ENCODE measurements at regions of chr15 and their contacts with region 1.

Region 1: GRCh38 chr15:43285609-43286037 is 18.9 kb upstream of the TGM5 start:
- DNase-seq: peak; percentile 85
- CTCF ChIP-seq: peak; percentile 84

Region 2: DNA sequence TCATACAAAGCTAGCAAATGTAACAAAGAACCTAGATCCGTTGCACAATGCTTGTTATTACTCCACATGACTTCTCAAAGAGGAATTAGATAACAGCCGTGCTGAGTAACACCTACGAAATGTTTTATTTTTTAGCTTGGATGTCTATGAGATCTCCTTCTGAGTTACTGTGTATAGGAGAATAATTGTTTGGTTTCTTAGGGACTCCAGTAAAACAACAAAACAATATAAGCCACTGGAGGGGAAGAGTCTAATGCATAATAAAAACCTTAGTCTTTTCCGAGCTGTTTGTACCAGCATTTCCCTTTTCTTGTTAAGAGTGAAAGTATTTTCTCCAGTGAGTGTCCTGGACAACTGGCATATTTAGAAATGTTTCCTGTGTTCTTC is 774.6 kb before region 1 on chr15:
- CTCF ChIA-PET with region 1: no interaction called
- POLR2A ChIA-PET with region 1: no interaction called
- DNase-seq: no peak
- CTCF ChIP-seq: no peak

Region 3: DNA sequence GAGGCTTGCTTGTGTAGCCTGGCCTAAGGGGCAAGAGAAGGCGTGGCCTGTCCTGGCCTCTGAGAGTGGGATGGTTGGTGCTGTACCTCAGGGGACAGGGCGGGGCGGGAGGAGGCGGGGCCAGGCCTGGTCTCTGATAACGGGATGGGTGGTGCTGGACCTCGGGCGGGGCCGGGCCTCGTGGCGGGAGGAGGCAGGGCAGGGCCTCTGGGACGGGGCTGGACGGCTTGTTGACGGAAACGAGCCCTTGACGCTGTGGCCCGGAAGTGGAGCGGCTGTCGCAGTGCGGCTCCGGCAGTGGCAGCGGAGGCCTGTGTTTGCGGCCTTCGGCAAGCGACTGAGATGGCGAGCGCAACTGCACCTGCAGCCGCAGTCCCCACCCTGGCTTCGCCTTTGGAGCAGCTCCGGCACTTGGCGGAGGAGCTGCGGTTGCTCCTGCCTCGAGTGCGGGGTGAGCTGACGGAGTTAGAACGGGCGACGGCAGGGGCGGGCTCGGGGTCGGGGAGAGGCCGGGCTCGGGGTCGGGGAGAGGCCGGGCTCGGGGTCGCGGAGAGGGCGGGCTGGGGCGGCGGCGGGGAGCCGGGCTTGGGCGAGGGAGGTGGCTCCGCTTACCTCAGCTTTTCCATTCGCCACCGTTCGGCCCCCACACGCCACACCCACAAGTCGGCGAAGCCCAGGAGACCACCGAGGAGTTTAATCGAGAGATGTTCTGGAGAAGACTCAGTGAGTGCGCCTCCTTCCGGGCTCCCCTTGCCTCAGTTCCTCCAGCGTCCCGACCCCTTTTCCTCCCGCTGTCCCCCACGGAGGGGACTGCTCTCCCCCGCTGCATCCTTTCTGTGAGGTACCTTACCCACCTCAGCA is 100.2 kb before region 1 on chr15 and contains the start of gene CCNDBP1:
- CTCF ChIA-PET with region 1: interaction called, 19 read pairs
- POLR2A ChIA-PET with region 1: no interaction called
- DNase-seq: peak; percentile 99
- CTCF ChIP-seq: peak; percentile 30

Region 4: GRCh38 chr15:43204016-43204901 is 81.4 kb before region 1 on chr15:
- CTCF ChIA-PET with region 1: interaction called, 40 read pairs
- POLR2A ChIA-PET with region 1: no interaction called
- DNase-seq: peak; percentile 69
- CTCF ChIP-seq: peak; percentile 75

Region 5: DNA sequence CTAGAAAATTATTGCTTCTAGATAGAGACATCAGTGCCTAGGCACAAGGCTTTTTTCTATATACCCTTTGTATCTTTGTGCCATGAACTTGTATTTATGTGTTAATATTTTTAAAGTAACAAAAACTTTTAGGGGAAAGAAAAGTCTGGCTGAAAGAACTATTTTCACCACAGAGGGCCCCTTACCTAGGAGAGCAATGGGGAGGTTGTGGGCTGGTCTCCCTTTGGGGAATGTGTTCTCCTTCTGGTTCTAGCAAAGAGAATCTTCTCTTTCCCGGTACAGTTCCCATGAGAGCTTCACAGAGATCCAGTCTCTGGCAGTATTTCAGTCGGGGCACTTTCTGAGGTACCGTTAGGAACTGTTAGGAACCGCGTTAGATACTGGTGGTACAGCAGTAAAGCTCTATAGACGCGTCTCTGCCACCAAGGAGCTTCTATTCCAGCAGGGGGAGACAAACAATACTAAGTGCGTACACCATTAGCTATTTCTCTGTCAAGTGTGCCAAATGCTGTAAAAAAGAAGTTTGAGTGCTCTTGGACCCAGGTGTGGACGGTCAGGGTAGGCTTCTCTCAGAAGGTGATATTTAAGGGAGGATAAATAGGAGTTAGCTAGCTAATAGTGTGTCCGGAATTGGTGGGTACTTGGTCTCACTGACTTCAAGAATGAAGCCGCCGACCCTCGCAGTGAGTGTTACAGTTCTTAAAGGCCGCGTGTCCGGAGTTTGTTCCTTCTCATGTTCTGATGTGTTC is 60.2 kb before region 1 on chr15:
- CTCF ChIA-PET with region 1: interaction called, 326 read pairs
- POLR2A ChIA-PET with region 1: no interaction called
- DNase-seq: peak; percentile 79
- CTCF ChIP-seq: peak; percentile 72

Region 6: DNA sequence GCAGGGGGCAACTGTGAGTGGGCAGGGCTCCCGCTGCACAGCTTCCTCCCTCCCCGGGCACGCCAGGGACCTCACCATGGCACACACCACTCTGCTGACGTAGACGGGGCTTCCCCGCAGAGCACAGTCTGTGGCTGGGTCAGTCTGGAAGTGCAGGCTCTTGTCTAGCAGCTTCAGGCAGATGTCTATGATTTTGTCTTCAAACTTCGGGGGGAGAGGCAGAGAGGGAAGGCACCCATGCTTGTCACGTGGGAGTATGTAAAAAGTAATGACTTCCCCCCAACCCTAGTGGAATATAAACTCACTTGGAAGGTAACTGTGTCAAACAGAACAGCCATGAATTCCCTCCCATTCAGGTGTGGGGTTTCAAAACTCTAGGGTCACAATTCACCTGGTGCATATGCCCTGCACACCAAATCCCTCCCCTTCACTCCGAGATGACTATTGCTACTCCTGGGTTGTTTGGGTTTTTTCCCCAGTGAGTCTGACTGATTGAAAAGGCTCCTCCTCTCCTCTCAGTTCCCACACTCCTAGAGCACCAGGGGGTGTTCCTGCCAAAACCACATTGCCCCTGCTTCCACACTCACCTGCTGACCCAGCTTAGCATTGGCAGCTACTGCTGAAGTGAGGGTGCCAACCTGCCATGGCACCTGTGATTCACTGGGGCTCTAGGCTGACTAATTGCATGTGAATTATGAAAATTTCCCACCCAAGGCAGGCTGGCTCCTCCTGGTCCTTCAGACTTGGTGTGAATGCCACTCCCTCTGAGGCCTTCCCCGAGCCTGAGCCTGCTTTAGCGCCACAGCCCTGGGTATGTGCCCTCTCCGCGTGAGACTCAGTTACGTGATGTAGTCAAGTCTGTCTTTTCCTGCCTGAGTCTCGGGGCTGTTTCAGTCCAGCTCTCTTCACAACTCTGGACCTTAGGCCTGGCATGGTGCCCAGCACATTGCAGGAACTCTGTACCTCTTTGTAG is 31.9 kb before region 1 on chr15:
- CTCF ChIA-PET with region 1: interaction called, 27 read pairs
- POLR2A ChIA-PET with region 1: no interaction called
- DNase-seq: peak; percentile 64
- CTCF ChIP-seq: no peak

Region 7: GRCh38 chr15:43274136-43274535 is 11.5 kb before region 1 on chr15:
- CTCF ChIA-PET with region 1: interaction called, 51 read pairs
- POLR2A ChIA-PET with region 1: no interaction called
- DNase-seq: no peak
- CTCF ChIP-seq: no peak

Region 8: DNA sequence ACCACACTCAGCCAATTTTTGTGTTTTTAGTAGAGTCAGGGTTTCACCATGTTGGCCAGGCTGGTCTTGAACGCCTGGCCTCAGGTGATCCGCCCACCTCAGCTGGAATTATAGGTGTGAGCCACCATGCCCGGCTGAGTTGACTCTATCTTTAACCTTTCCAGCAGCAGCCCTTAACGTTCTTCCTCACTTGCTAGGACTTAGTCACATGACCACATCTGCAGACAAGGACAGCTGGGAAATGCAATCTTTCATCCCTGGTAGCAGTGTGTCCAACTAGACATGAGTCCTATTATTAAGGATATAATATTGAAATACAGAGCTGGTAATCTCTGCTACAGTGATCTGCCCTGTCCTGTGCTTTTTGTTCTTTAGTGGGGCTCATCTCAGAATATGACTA is 26.8 kb after region 1 on chr15:
- CTCF ChIA-PET with region 1: interaction called, 41 read pairs
- POLR2A ChIA-PET with region 1: no interaction called
- DNase-seq: no peak
- CTCF ChIP-seq: no peak

Measured in GM10248 (cell line).